ENCODE measurements at regions of chr1 and their contacts with region 1.

Region 1: GRCh38 chr1:112706908-112707663 is at the start of gene RHOC:
- ATAC-seq: peak; percentile 52 to 80 (median 72)
- H3K4me3 ChIP-seq: peak within 1 kb of the TSS; percentile 40 to 81 (median 47)
- H3K27ac ChIP-seq: peak within 1 kb of the TSS in 1 of 2 donors; percentile 30
- H3K4me1 ChIP-seq: peaks cover 21% of the 10 kb centered on the region in 2 donors
- total RNA-seq, gene RHOC: 57.4 to 468 (median 89.6) TPM

Region 2: DNA sequence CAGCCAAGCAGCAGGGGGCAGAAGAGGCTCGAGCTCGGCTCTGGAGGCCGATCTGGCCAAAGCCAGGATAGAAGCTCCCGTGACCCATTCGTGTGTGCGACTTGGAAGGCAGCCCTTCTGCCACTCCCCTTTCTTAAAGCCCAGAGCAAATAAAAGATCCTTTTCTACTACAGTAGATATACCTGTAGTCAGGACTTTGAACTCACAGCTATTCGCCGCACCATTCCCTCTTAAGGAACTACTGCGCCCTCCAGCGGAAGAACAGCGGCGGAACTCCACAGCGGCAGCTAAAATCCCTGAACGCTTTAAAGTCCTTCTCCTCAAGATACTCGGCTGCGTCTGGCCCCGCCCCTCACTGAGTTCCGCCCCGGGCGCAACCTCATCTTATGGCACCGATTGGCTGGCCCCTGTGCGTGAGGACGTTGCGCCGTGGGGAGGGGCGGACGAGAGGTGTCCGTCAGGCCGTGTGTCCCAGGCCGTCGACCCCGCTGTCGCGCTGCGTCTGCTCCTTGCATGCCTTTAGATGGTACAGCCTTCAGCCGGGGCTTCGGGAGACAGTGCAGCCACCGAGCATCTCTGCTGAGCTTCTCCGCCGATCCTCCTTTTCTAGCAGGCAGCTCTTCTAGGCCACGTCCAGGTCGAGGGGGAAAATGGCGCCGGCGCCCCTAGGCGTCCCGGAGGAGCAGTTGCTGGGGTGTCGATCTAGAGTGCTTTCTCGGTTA is 365.8 kb after region 1 on chr1 and contains the start of gene LRIG2:
- in situ Hi-C with region 1: loop called in 2 of 9 experiments (anchors 25 kb)
- ATAC-seq: peak; percentile 92 to 96 (median 95)
- H3K4me3 ChIP-seq: peak within 1 kb of the TSS; percentile 67 to 82 (median 77)
- H3K27ac ChIP-seq: peak within 1 kb of the TSS; percentile 96
- H3K4me1 ChIP-seq: peaks cover 21 to 22% of the 10 kb centered on the region in 2 donors
- total RNA-seq, gene LRIG2: 11.9 to 25.4 (median 20.6) TPM